Caco-2 (cell line): ENCODE measurements at regions of chr12 and their contacts with region 1.

Region 1: GRCh38 chr12:69157023-69157655 is 82.2 kb upstream of the CPSF6 start:
- DNase-seq: peak; percentile 78 to 83
- H3K4me3 ChIP-seq: no peak overlapping the region
- H3K4me3 Mint-ChIP-seq: no peak overlapping the region
- H3K27ac Mint-ChIP-seq: no peak overlapping the region
- H3K4me1 ChIP-seq: 0 out of 2 replicates have a peak, but pooled peaks cover under 1% of the 10 kb centered on the region
- H3K4me1 Mint-ChIP-seq: peaks cover 6% of the 10 kb centered on the region
- H3K27me3 ChIP-seq: no peaks in the 10 kb centered on the region
- H3K27me3 Mint-ChIP-seq: no peaks in the 10 kb centered on the region
- CTCF ChIP-seq: peak; percentile 82 to 91

Region 2: DNA sequence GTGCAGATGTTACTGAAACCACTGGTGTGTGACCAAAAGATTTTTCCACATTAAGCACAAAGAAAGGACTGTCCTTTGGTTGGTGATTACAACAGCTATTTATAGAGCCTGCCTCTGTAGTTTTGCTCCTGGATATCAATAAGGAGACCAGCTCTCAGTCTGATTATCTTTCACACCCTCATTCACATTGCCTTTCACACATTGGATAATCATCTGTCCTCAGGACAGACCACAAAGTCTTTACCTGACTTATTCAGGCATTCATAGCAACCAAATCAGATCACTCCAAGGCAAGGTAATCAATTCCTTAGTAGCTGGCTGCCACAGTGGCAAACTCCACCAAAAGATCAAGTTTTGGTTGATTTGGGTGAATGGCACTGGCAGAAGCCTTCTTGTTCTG is 22.6 kb after region 1 on chr12:
- CTCF ChIA-PET with region 1: no interaction called
- POLR2A ChIA-PET with region 1: no interaction called
- intact Hi-C with region 1: no loop called
- DNase-seq: no peak
- H3K4me3 ChIP-seq: no peak overlapping the region
- H3K4me3 Mint-ChIP-seq: no peak overlapping the region
- H3K27ac Mint-ChIP-seq: no peak overlapping the region
- H3K4me1 ChIP-seq: no peaks in the 10 kb centered on the region
- H3K4me1 Mint-ChIP-seq: no peaks in the 10 kb centered on the region
- H3K27me3 ChIP-seq: no peaks in the 10 kb centered on the region
- H3K27me3 Mint-ChIP-seq: peaks cover 6% of the 10 kb centered on the region
- CTCF ChIP-seq: no peak

Region 3: GRCh38 chr12:69211160-69211559 is 54.0 kb after region 1 on chr12:
- CTCF ChIA-PET with region 1: interaction called, 10 read pairs
- POLR2A ChIA-PET with region 1: no interaction called
- intact Hi-C with region 1: no loop called
- DNase-seq: no peak
- H3K4me3 ChIP-seq: no peak overlapping the region
- H3K4me3 Mint-ChIP-seq: no peak overlapping the region
- H3K27ac Mint-ChIP-seq: no peak overlapping the region
- H3K4me1 ChIP-seq: no peaks in the 10 kb centered on the region
- H3K4me1 Mint-ChIP-seq: no peaks in the 10 kb centered on the region
- H3K27me3 ChIP-seq: no peaks in the 10 kb centered on the region; the same call in 1 of the 2 replicates
- H3K27me3 Mint-ChIP-seq: no peaks in the 10 kb centered on the region
- CTCF ChIP-seq: no peak

Region 4: DNA sequence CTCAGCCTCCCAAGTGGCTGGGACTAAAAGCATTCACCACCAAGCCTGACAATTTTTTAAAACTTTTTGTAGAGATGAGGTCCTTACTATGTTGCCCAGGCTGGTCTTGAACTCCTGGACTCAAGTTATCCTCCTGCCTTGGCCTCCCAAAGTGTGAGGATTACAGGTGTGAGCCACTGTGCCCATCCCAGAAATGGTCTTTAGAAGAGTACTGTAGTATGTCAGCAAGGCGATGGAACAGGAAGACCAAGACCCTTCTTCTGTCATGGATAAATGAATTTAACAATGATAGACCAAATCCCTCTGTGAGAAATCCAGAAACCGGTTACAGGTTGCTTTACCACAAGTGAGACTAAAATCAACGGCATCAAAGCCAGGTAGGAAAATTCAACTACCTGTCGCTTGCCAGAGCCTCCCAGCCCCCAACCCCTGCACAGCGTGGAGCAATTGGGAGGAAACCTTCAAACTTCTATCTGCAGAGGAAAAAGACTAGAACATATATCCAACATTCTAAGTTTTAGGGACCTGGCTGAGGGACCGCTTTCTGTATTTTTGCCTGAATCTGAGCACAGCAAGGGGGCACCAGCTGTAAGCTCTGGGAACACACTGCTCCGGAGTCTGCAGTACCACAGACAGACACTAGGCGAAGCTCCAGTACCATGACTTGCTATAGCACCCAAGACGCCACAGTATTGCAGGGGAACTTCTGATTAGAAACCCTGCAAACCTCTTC is 133.6 kb after region 1 on chr12:
- CTCF ChIA-PET with region 1: no interaction called
- POLR2A ChIA-PET with region 1: no interaction called
- intact Hi-C with region 1: loop called (anchors 5 kb)
- DNase-seq: peak; percentile 82 to 85
- H3K4me3 ChIP-seq: no peak overlapping the region
- H3K4me3 Mint-ChIP-seq: no peak overlapping the region
- H3K27ac Mint-ChIP-seq: no peak overlapping the region
- H3K4me1 ChIP-seq: no peaks in the 10 kb centered on the region
- H3K4me1 Mint-ChIP-seq: peaks cover 11% of the 10 kb centered on the region
- H3K27me3 ChIP-seq: no peaks in the 10 kb centered on the region
- H3K27me3 Mint-ChIP-seq: no peaks in the 10 kb centered on the region
- CTCF ChIP-seq: peak; percentile 91 to 96

Region 5: GRCh38 chr12:69388371-69388770 is 231.2 kb after region 1 on chr12:
- CTCF ChIA-PET with region 1: no interaction called
- POLR2A ChIA-PET with region 1: no interaction called
- intact Hi-C with region 1: loop called (anchors 10 kb)
- DNase-seq: peak in 1 of 2 experiments; percentile 50
- H3K4me3 ChIP-seq: no peak overlapping the region
- H3K4me3 Mint-ChIP-seq: no peak overlapping the region
- H3K27ac Mint-ChIP-seq: no peak overlapping the region
- H3K4me1 ChIP-seq: peaks cover 34% of the 10 kb centered on the region
- H3K4me1 Mint-ChIP-seq: peaks cover 15% of the 10 kb centered on the region
- H3K27me3 ChIP-seq: no peaks in the 10 kb centered on the region
- H3K27me3 Mint-ChIP-seq: no peaks in the 10 kb centered on the region
- CTCF ChIP-seq: peak; percentile 43 to 70